ENCODE measurements at regions of chr10 and their contacts with region 1.

Region 1: GRCh38 chr10:127715782-127716378 is 21.1 kb upstream of the FOXI2 start:
- DNase-seq: no peak
- H3K4me3 ChIP-seq: no peak overlapping the region
- H3K4me1 ChIP-seq: no peaks in the 10 kb centered on the region
- H3K27me3 ChIP-seq: no peaks in the 10 kb centered on the region

Region 2: DNA sequence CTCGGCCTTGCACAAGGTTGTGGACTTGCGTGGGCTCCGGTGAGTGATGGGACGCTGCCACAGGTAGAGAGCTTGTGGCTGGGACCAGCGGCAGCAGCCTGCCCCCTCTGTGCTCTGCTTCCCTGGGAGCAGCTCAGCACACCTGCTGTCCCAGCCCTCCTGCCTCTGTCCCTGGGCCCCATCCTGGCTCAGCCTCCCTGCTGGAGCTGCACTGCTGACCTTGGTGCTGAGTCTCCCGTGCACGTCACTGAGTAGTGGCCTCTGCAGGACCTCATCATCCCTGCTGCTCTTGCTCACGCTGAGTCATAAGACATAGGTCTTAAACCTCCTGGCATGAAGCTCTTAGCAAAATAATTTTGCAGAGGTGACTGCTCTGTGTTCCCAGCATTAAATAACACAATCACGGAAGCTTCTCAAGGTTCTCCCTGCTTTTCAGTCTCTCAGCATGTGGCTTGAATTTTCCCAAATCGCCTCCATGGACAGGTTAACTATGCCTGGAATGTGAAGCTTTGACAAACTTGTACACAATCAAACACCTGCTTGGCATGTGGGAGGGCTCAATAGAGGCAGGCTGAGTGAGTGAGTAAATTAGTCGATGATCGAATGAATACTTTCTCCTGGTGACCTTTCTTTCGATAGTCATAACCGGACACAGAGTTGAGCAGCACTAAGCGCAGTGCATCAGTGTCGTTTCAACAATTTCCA is 230.6 kb before region 1 on chr10:
- in situ Hi-C with region 1: no loop called
- DNase-seq: no peak
- H3K4me3 ChIP-seq: no peak overlapping the region
- H3K4me1 ChIP-seq: no peaks in the 10 kb centered on the region
- H3K27me3 ChIP-seq: no peaks in the 10 kb centered on the region

Region 3: DNA sequence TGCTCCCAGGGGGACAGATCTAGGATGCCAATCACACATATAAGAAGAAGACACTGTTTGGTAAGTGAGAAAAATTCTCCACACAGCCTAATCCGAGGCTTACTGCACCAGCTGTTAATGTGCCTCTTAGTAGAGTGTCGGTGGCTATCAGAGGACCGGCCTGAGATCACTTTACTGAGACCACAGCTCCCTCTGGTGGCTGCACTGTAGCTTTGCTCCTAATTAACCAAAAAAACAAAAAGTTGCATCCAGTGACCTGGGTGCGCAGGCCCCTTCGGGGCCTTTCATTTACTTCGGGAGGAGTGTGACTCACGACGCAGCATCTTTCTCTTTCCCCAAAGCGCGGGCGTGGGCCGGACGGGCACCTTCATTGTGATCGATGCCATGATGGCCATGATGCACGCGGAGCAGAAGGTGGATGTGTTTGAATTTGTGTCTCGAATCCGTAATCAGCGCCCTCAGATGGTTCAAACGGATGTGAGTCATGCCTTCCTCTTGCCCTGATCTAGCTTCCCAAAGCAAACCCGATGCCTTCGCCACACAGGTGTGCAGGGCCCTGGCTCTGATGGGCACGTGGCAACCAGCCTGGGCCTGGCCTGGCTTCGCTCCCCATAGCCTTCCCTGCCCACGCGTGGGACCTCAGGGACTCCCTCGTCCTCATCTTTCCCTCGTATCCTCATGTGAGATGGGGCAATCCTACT is 353.6 kb after region 1 on chr10:
- in situ Hi-C with region 1: loop called (anchors 10 kb)
- DNase-seq: peak; percentile 78 to 84
- H3K4me3 ChIP-seq: no peak overlapping the region
- H3K4me1 ChIP-seq: no peaks in the 10 kb centered on the region
- H3K27me3 ChIP-seq: no peaks in the 10 kb centered on the region

Region 4: DNA sequence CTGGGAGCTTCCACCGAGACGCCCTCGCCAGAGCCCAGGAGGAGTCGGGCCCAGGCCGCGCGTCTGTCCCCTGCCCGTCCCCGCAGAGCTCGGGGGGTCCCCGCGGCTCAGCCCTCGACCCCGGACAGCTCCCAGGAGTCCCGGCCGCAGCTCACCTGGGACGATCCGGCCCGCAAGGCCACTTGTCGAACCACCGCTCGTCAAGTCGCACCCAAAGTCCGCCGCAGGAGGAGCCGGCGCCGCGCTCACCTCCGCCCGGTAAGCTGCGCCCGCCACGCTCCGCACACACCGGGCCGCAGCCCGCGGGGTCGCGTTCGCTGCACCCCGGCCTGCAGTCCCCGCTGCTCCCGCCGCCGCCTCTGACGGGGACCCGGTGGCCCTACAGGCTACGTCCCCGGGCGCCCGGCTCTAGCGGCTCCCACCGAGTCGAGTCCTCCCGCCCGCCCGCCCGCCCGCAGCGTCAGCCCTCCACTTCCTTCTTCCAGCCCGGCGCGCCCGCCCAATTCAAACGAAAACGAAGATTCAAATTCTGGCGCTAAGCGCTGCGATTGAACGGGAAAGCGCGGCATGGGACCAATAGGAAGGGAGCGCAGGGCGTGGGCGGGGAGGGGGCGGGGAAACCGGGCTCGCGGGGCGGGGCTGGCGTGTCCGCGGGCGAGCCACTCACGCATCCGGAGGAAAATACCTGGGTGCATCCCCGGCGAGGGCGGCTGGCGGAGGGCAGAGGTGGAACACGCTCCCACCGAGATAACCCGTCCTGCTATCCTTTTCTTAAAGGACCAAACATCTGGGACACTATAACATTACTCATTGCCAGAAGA is 410.3 kb after region 1 on chr10 and contains the start of gene MKI67:
- in situ Hi-C with region 1: no loop called
- DNase-seq: peak; percentile 91 to 93
- H3K4me3 ChIP-seq: peak within 1 kb of the TSS; percentile 88
- H3K4me1 ChIP-seq: peaks cover 24% of the 10 kb centered on the region
- H3K27me3 ChIP-seq: no peaks in the 10 kb centered on the region